T-cell (primary cell): ENCODE measurements at regions of chr3 and their contacts with region 1.

Region 1: GRCh38 chr3:85574306-85574705 is 615.5 kb downstream of the CADM2 start:
- DNase-seq: no peak
- ATAC-seq: no peak
- H3K4me3 ChIP-seq: no peak overlapping the region
- H3K4me3 Mint-ChIP-seq: no peak overlapping the region
- H3K27ac ChIP-seq: no peak overlapping the region
- H3K27ac Mint-ChIP-seq: no peak overlapping the region
- H3K4me1 ChIP-seq: no peaks in the 10 kb centered on the region
- H3K4me1 Mint-ChIP-seq: no peaks in the 10 kb centered on the region
- H3K27me3 ChIP-seq: no peaks in the 10 kb centered on the region
- H3K27me3 Mint-ChIP-seq: no peaks in the 10 kb centered on the region

Region 2: DNA sequence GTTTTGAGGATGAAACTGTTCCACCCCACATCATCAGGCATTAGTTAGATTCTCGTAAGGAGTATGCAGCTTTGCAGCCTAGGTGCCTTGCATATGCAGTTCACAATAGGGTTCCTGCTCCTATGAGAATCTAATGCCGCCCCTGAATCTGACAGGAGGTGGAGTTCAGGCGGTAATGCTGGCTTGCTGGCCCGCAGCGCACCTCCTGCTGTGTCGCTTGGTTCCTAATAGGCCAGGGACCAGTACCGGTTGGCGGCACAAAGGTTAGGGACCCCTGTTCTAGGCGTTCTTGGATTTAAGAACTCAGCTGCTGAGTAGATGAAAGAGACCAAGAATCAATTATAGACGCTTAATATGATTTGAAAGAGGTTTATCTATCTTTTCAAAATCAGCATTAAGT is 20.2 kb before region 1 on chr3:
- CTCF ChIA-PET with region 1: no interaction called
- POLR2A ChIA-PET with region 1: interaction called in 1 of 2 experiments, 12 read pairs
- DNase-seq: no peak
- ATAC-seq: no peak
- H3K4me3 ChIP-seq: no peak overlapping the region
- H3K4me3 Mint-ChIP-seq: no peak overlapping the region
- H3K27ac ChIP-seq: no peak overlapping the region
- H3K27ac Mint-ChIP-seq: no peak overlapping the region
- H3K4me1 ChIP-seq: no peaks in the 10 kb centered on the region
- H3K4me1 Mint-ChIP-seq: no peaks in the 10 kb centered on the region
- H3K27me3 ChIP-seq: no peaks in the 10 kb centered on the region
- H3K27me3 Mint-ChIP-seq: no peaks in the 10 kb centered on the region

Region 3: DNA sequence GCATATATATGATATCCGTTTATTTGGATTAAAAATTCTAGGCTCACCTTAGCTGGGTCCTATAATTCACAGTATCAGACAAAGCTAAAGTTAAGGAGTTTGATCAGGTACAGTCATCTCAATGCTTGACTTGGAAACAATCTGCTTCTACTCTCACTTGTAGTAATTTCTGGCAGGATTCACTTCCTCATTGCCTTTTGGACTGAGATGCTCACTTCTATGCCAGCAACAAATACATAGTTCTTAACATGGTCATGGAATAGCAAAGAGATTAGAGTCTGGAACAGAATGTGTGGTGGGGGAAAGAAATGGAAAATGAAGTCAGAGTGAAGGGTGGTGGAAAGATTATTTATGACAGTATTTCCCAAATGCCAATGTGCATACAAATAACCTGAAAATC is 78.1 kb after region 1 on chr3:
- CTCF ChIA-PET with region 1: no interaction called
- POLR2A ChIA-PET with region 1: interaction called in 1 of 2 experiments, 10 read pairs
- DNase-seq: no peak
- ATAC-seq: no peak
- H3K4me3 ChIP-seq: no peak overlapping the region
- H3K4me3 Mint-ChIP-seq: no peak overlapping the region
- H3K27ac ChIP-seq: no peak overlapping the region
- H3K27ac Mint-ChIP-seq: no peak overlapping the region
- H3K4me1 ChIP-seq: no peaks in the 10 kb centered on the region
- H3K4me1 Mint-ChIP-seq: no peaks in the 10 kb centered on the region
- H3K27me3 ChIP-seq: no peaks in the 10 kb centered on the region
- H3K27me3 Mint-ChIP-seq: no peaks in the 10 kb centered on the region

Region 4: GRCh38 chr3:86645756-86646155 is 1071.5 kb after region 1 on chr3:
- CTCF ChIA-PET with region 1: no interaction called
- POLR2A ChIA-PET with region 1: no interaction called
- DNase-seq: no peak
- ATAC-seq: no peak
- H3K4me3 ChIP-seq: no peak overlapping the region
- H3K4me3 Mint-ChIP-seq: no peak overlapping the region
- H3K27ac ChIP-seq: no peak overlapping the region
- H3K27ac Mint-ChIP-seq: no peak overlapping the region
- H3K4me1 ChIP-seq: no peaks in the 10 kb centered on the region
- H3K4me1 Mint-ChIP-seq: no peaks in the 10 kb centered on the region
- H3K27me3 ChIP-seq: no peaks in the 10 kb centered on the region
- H3K27me3 Mint-ChIP-seq: no peaks in the 10 kb centered on the region